BJ (cell line): ENCODE measurements at regions of chr11 and their contacts with region 1.

Region 1: GRCh38 chr11:114307524-114308203 is 11.5 kb downstream of the NNMT start:
- DNase-seq: peak; percentile 48
- H3K4me3 ChIP-seq: peak overlapping the region; percentile 21; the same call in 1 of the 2 replicates
- H3K27me3 ChIP-seq: no peaks in the 10 kb centered on the region
- CTCF ChIP-seq: no peak

Region 2: GRCh38 chr11:113457784-113458183 is 849.9 kb before region 1 on chr11:
- CTCF ChIA-PET with region 1: no interaction called
- POLR2A ChIA-PET with region 1: no interaction called
- DNase-seq: no peak
- H3K4me3 ChIP-seq: no peak overlapping the region
- H3K27me3 ChIP-seq: no peaks in the 10 kb centered on the region
- CTCF ChIP-seq: no peak

Region 3: DNA sequence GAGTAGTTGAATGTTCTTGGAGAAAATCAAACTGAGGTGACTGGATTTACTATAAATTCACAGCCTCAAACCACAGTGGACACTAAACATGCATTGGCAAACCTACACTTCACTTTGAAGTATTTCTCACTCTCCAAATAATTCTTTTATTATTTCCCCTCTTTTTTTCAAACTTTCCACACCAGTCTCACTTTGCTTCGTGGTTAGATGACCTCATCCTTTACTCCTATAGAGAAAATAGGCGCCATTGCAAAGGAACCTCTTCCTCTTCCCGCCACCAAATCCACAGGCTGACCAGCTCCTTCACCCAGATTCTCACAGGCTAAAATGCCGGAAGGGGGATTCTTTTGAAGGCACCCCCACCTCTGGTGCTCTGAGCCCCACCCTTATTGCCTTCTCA is 299.3 kb before region 1 on chr11:
- CTCF ChIA-PET with region 1: no interaction called
- POLR2A ChIA-PET with region 1: no interaction called
- DNase-seq: no peak
- H3K4me3 ChIP-seq: no peak overlapping the region
- H3K27me3 ChIP-seq: no peaks in the 10 kb centered on the region
- CTCF ChIP-seq: no peak

Region 4: GRCh38 chr11:114295676-114296604 is 11.7 kb before region 1 on chr11 and contains the start of gene NNMT:
- CTCF ChIA-PET with region 1: no interaction called
- POLR2A ChIA-PET with region 1: interaction called, 43 read pairs
- DNase-seq: peak; percentile 95
- H3K4me3 ChIP-seq: peak within 1 kb of the TSS; percentile 88
- H3K27me3 ChIP-seq: no peaks in the 10 kb centered on the region
- CTCF ChIP-seq: no peak; the same call in 1 of the 2 replicates
- polyA plus RNA-seq, gene NNMT: 590 and 724 TPM in 2 replicates